ENCODE measurements at regions of chrX and their contacts with region 1.

Region 1: GRCh38 chrX:12974796-12975669 is at the start of gene TMSB4X:
- DNase-seq: peak; percentile 33 to 80
- H3K4me3 ChIP-seq: peak within 1 kb of the TSS; percentile 82 to 100 (median 88)
- H3K27ac ChIP-seq: peak within 1 kb of the TSS; percentile 91
- H3K4me1 ChIP-seq: peaks cover 0 to 10% (median 1%) of the 10 kb centered on the region in 4 experiments; a peak in 4 of 7 replicates
- H3K27me3 ChIP-seq: no peaks in the 10 kb centered on the region
- CTCF ChIP-seq: no peak
- EP300 ChIP-seq: no peak
- POLR2A ChIP-seq: peak; percentile 98 to 99
- RAD21 ChIP-seq: no peak
- total RNA-seq, gene TMSB4X: 2,063 and 2,127 TPM in 2 replicates

Region 2: GRCh38 chrX:12946838-12947544 is 28.0 kb before region 1 on chrX:
- CTCF ChIA-PET with region 1: interaction called, 9 read pairs
- POLR2A ChIA-PET with region 1: interaction called, 10 read pairs
- DNase-seq: peak; percentile 54 to 86
- H3K4me3 ChIP-seq: no peak overlapping the region
- H3K27ac ChIP-seq: peak overlapping the region; percentile 67; the same call in 1 of the 2 replicates
- H3K4me1 ChIP-seq: peaks cover 0 to 7% (median 5%) of the 10 kb centered on the region in 4 experiments; a peak in 5 of 7 replicates
- H3K27me3 ChIP-seq: no peaks in the 10 kb centered on the region
- CTCF ChIP-seq: peak; percentile 62 to 100 (median 90)
- EP300 ChIP-seq: 0 out of 3 replicates have a peak, but pooled peaks of 1 of the 2 experiments have one; percentile 15
- POLR2A ChIP-seq: no peak
- RAD21 ChIP-seq: peak; percentile 79 to 83

Region 3: DNA sequence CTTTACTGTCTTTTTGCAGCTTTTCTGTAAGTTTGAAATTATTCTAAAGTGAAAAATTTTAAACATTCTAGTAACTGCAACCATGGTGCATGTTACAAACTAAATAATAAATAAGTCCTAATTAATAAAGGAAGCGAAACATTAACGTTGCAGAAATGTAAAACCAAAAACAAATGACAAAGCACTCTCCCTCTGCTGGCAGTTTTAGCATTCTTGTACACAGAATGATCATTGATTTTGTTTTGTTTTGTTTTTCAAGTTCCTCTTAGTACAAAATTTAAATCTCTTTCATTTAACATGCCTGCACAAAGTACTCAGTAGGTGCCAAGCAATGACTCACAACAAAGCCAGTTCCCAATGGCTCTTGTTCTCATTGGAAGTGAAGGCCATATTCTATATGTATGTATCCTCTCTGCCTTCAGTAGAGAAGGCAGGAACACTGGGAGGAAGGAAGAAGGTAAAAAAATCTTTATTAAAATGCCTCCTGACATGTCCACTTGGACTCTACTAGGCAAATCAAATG is 13.8 kb before region 1 on chrX:
- CTCF ChIA-PET with region 1: interaction called, 3 read pairs
- POLR2A ChIA-PET with region 1: interaction called, 19 read pairs
- DNase-seq: no peak
- H3K4me3 ChIP-seq: no peak overlapping the region
- H3K27ac ChIP-seq: no peak overlapping the region
- H3K4me1 ChIP-seq: no peaks in the 10 kb centered on the region
- H3K27me3 ChIP-seq: no peaks in the 10 kb centered on the region
- CTCF ChIP-seq: no peak
- EP300 ChIP-seq: no peak
- POLR2A ChIP-seq: no peak
- RAD21 ChIP-seq: no peak

Region 4: GRCh38 chrX:13000301-13000811 is 25.3 kb after region 1 on chrX:
- CTCF ChIA-PET with region 1: no interaction called
- POLR2A ChIA-PET with region 1: interaction called, 10 read pairs
- DNase-seq: no peak
- H3K4me3 ChIP-seq: no peak overlapping the region
- H3K27ac ChIP-seq: no peak overlapping the region
- H3K4me1 ChIP-seq: peaks cover 0 to 7% (median 0%) of the 10 kb centered on the region in 4 experiments; a peak in 3 of 7 replicates
- H3K27me3 ChIP-seq: no peaks in the 10 kb centered on the region
- CTCF ChIP-seq: no peak
- EP300 ChIP-seq: no peak
- POLR2A ChIP-seq: no peak
- RAD21 ChIP-seq: no peak

Region 5: GRCh38 chrX:13101441-13102139 is 126.6 kb after region 1 on chrX:
- CTCF ChIA-PET with region 1: no interaction called
- POLR2A ChIA-PET with region 1: no interaction called
- DNase-seq: no peak
- H3K4me3 ChIP-seq: no peak overlapping the region
- H3K27ac ChIP-seq: no peak overlapping the region
- H3K4me1 ChIP-seq: no peaks in the 10 kb centered on the region
- H3K27me3 ChIP-seq: no peaks in the 10 kb centered on the region
- CTCF ChIP-seq: no peak
- EP300 ChIP-seq: no peak
- POLR2A ChIP-seq: no peak
- RAD21 ChIP-seq: no peak

Region 6: DNA sequence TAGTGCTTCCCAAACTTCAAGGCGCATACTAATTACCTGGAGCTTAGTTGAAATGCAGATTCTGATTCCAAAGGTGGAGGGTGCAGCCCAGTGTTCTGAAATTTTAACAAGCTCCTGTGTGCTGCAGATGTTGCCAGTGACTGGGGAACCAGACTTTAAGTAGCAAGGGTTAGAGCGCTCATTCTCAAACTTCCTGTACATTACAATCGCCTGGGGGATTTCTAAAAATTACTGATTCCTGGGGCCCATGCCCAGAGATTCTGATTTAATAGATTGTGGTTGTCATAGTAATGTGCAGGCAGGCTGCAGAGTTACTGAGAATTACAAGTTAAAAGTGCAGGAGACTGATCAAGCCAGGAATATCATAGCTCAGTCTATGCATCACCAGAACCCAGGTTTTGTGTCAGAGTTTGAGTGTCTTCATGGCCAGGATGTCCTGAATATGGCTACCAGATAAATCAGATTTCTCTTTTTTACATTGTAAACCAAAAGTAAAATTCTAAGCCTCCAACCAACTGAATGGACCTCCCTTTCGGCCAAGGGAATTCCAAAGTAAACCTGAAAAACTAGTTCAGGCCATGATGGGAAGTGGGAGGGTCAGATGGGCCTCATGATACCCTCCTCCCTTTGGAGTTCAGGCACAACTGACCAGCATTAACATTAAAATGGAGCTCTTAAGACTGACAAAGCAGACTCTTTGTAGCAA is 223.2 kb after region 1 on chrX:
- CTCF ChIA-PET with region 1: interaction called, 3 read pairs
- POLR2A ChIA-PET with region 1: interaction called, 20 read pairs
- DNase-seq: peak in 1 of 2 experiments; percentile 51
- H3K4me3 ChIP-seq: peak overlapping the region in 3 of 4 experiments; percentile 35 to 48 (median 36); a peak in 4 of 8 replicates
- H3K27ac ChIP-seq: peak overlapping the region; percentile 89
- H3K4me1 ChIP-seq: peaks cover 0 to 17% (median 7%) of the 10 kb centered on the region in 4 experiments; a peak in 4 of 7 replicates
- H3K27me3 ChIP-seq: no peaks in the 10 kb centered on the region
- CTCF ChIP-seq: no peak
- EP300 ChIP-seq: peak in 1 of 2 experiments; percentile 64; a peak in 1 of 3 replicates
- POLR2A ChIP-seq: no peak; a peak in 2 of 3 replicates
- RAD21 ChIP-seq: 0 out of 4 replicates have a peak, but pooled peaks of 1 of the 2 experiments have one; percentile 18

Measured in H1 (cell line).